Ascending aorta (tissue), 2 donors: ENCODE measurements at regions of chr11 and their contacts with region 1.

Region 1: GRCh38 chr11:71977743-71978418 is 20.8 kb upstream of the IL18BP start:
- DNase-seq: no peak
- H3K4me3 ChIP-seq: no peak overlapping the region
- H3K27ac ChIP-seq: no peak overlapping the region
- H3K4me1 ChIP-seq: no peaks in the 10 kb centered on the region
- H3K27me3 ChIP-seq: no peaks in the 10 kb centered on the region
- CTCF ChIP-seq: peak; percentile 67 to 75 (median 73)

Region 2: GRCh38 chr11:72091005-72091691 is 113.3 kb after region 1 on chr11:
- intact Hi-C with region 1: loop called (anchors 2 kb)
- DNase-seq: peak; percentile 49 to 81
- H3K4me3 ChIP-seq: no peak overlapping the region
- H3K27ac ChIP-seq: no peak overlapping the region
- H3K4me1 ChIP-seq: peaks cover 0 to 6% of the 10 kb centered on the region in 2 donors
- H3K27me3 ChIP-seq: no peaks in the 10 kb centered on the region
- CTCF ChIP-seq: peak; percentile 77 to 89 (median 87)

Region 3: DNA sequence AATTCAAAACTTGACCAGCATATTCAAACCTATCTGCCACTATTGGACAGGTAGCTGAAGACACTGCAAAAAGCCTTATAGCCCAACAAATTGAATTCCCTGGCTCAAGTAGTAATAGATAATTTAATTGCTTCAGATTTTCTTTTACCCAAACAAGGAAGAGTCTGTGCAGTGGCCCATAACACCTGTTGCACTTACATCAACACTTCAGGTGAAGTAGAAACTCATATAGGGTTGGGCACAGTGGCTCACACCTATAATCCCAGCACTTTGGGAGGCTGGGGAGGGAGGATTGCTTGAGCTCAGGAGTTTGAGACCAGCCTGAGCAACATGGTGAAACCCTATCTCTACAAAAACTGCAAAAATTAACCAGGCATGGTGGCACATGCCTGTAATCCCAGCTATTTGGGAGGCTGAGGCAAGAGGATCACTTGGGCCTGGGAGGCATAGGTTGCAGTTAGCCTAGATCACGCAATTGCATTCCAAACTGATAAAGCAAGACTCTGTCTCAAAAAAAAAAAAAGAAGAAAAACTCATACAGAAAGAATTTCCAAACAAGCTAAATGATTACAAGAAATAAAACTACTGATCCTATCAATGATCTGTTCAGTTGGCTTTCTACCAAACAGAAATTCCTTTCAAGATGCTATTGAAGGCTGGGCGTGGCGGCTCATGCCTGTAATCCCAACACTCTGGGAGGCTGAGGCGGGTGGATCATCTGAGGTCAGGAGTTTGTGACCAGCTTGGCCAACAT is 167.1 kb after region 1 on chr11:
- intact Hi-C with region 1: loop called (anchors 1 kb)
- DNase-seq: no peak
- H3K4me3 ChIP-seq: no peak overlapping the region
- H3K27ac ChIP-seq: no peak overlapping the region
- H3K4me1 ChIP-seq: no peaks in the 10 kb centered on the region
- H3K27me3 ChIP-seq: no peaks in the 10 kb centered on the region
- CTCF ChIP-seq: no peak